ENCODE measurements at regions of chr10 and their contacts with region 1.

Region 1: GRCh38 chr10:47181052-47181849 is 118.7 kb upstream of the GDF10 start:
- DNase-seq: peak in 2 of 9 donors; percentile 7 to 15
- ATAC-seq: no peak
- H3K4me3 ChIP-seq: no peak overlapping the region
- H3K4me3 Mint-ChIP-seq: no peak overlapping the region
- H3K27ac ChIP-seq: no peak overlapping the region
- H3K27ac Mint-ChIP-seq: no peak overlapping the region
- H3K4me1 ChIP-seq: no peaks in the 10 kb centered on the region
- H3K4me1 Mint-ChIP-seq: peaks cover 0 to 13% (median 4%) of the 10 kb centered on the region in 7 donors
- H3K27me3 ChIP-seq: no peaks in the 10 kb centered on the region
- H3K27me3 Mint-ChIP-seq: no peaks in the 10 kb centered on the region

Region 2: DNA sequence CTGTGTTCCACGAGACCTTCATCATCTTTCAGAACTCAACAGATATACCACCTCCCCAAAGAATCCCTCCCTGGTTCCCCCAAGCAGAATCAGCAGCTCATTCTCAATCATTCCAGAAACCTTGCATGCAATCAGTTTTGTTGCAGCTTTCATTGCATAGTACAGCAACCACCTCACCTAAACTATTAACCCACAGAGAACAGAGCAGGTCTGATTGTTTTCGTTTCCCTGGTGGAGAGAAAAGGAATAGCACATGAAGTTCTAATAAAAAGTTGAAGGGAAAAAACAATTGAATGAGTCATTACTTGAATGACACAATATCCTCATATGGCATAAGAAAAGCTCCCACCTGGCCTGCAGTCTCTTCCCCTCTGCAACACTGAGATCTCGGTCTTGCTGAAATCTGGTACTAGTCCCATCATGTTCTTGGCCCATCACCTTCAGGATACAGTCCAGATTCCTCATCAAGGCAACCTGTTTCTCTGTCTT is 28.3 kb before region 1 on chr10:
- CTCF ChIA-PET with region 1: no interaction called
- POLR2A ChIA-PET with region 1: no interaction called
- intact Hi-C with region 1: loop called in 1 of 2 experiments (anchors 2 kb)
- DNase-seq: no peak
- ATAC-seq: no peak
- H3K4me3 ChIP-seq: no peak overlapping the region
- H3K4me3 Mint-ChIP-seq: no peak overlapping the region
- H3K27ac ChIP-seq: no peak overlapping the region
- H3K27ac Mint-ChIP-seq: no peak overlapping the region
- H3K4me1 ChIP-seq: no peaks in the 10 kb centered on the region
- H3K4me1 Mint-ChIP-seq: peaks cover 0 to 13% (median 2%) of the 10 kb centered on the region in 7 donors
- H3K27me3 ChIP-seq: no peaks in the 10 kb centered on the region
- H3K27me3 Mint-ChIP-seq: peaks cover 0 to 17% (median 0%) of the 10 kb centered on the region in 5 donors